Caco-2 (cell line): ENCODE measurements at regions of chrX and their contacts with region 1.

Region 1: DNA sequence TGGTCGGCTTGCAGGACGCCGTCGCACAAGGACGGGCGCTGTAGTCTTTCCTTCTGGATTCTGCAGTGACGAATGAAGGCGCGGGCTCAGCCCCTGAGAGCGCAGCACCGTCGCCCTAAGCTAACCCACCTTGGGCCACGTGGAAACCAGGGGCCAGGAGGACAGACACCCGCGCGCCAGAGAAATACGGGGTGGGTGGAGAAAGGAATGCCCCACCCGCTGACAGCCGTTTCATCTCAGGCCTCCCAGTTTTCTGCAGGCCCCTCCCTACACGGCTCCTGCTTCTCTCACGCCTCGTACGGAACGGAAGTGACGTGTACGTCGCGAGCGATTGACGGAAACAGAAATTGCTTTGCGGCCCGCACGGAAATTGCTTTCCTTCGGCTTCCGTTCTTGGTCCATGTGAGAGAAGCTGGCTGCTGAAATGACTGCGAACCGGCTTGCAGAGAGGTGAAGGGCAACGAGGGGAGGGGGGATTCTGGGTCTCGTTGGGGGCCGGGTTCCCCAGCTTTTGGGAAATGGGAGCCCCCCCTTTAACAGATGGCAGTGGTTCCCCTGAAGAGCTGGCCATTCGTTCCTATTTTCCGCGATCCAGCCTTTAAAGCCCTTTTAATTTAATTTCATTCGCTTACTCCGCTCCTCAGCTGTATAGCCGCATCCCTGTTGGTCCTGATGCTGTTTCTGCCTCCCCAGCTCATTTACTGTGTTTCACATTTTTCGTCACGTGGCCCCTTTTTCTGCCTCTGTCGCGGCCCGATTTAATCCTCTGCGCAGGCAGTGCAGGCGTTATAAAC is at the start of gene UTP14A:
- DNase-seq: peak; percentile 88 to 93
- H3K4me3 ChIP-seq: peak within 1 kb of the TSS; percentile 75
- H3K4me3 Mint-ChIP-seq: peak within 1 kb of the TSS; percentile 86
- H3K27ac Mint-ChIP-seq: peak within 1 kb of the TSS; percentile 86
- H3K4me1 ChIP-seq: no peaks in the 10 kb centered on the region
- H3K4me1 Mint-ChIP-seq: no peaks in the 10 kb centered on the region
- H3K27me3 ChIP-seq: no peaks in the 10 kb centered on the region
- H3K27me3 Mint-ChIP-seq: no peaks in the 10 kb centered on the region
- CTCF ChIP-seq: no peak
- total RNA-seq, gene UTP14A: 24.5 and 24.6 TPM in 2 replicates

Region 2: GRCh38 chrX:129843459-129844306 is 62.3 kb before region 1 on chrX and contains the start of gene ZDHHC9:
- CTCF ChIA-PET with region 1: no interaction called
- POLR2A ChIA-PET with region 1: interaction called, 4 read pairs
- intact Hi-C with region 1: loop called (anchors 5 kb)
- DNase-seq: peak; percentile 90
- H3K4me3 ChIP-seq: peak within 1 kb of the TSS; percentile 84
- H3K4me3 Mint-ChIP-seq: peak within 1 kb of the TSS; percentile 91
- H3K27ac Mint-ChIP-seq: peak within 1 kb of the TSS; percentile 89
- H3K4me1 ChIP-seq: no peaks in the 10 kb centered on the region
- H3K4me1 Mint-ChIP-seq: peaks cover 6% of the 10 kb centered on the region
- H3K27me3 ChIP-seq: no peaks in the 10 kb centered on the region
- H3K27me3 Mint-ChIP-seq: no peaks in the 10 kb centered on the region
- CTCF ChIP-seq: no peak
- total RNA-seq, gene ZDHHC9: 41.0 and 41.2 TPM in 2 replicates